AG04450 (cell line): ENCODE measurements at regions of chr3 and their contacts with region 1.

Region 1: DNA sequence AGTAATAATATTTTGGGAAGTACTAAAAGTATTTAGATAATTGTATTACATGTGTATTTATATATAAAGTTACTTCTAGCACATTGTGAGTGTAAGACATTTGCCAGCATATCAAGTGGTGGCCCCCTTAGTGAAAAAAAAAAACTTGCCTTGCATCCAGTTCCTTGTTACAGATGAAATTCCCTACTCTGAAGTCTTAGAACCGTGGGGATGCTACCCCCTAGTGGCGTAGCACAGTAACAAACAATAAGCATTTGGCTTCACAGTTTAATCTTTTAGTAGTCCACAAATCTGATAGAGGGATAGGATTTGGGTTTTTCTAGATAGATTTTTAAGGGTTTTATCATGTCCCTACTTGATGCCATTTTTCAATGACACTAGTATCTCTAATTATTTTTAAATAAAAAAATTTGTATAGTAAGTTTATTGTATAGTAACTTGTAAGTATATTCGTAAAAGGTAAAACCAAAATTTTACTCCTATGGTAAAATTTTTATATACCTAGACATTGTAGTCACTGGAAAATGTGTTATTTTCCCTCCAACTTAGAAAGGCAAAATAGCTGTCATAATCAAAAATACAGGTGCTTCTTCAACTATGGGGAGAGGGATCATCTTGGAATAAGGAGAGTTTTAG is 14.3 kb downstream of the SMC4 start:
- DNase-seq: peak; percentile 74
- H3K4me3 ChIP-seq: no peak overlapping the region
- H3K27ac ChIP-seq: no peak overlapping the region
- H3K27me3 ChIP-seq: no peaks in the 10 kb centered on the region
- CTCF ChIP-seq: peak; percentile 93

Region 2: GRCh38 chr3:160401291-160402095 is 12.2 kb before region 1 on chr3:
- CTCF ChIA-PET with region 1: interaction called, 20 read pairs
- POLR2A ChIA-PET with region 1: no interaction called
- DNase-seq: peak; percentile 55
- H3K4me3 ChIP-seq: peak overlapping the region; percentile 98
- H3K27ac ChIP-seq: peak overlapping the region; percentile 73
- H3K27me3 ChIP-seq: no peaks in the 10 kb centered on the region
- CTCF ChIP-seq: no peak

Region 3: DNA sequence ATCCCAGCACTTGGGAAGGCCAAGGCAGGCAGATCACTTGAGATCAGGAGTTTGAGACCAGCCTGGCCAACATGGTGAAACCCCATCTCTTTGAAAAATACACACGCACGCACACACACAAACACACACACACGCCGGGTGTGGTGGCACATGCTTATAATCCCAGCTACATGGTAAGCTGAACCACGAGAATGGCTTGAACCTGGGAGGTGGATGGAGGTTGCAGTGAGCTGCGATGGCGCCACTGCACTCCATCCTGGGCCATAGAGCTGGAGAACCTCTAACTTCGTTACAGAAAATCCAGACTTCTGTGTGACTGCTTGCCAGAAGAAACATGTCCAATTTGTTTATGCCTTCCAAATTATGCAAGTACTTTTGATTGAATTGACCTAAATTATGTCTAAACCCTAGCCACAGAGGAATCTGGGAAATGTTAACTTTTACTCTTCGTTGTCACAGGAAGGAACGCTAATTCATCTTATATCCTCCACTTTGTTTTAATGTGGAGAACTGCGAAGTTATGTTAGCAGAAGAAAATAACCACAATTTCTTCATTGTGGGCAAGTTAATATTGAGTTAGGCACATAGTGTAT is 14.2 kb after region 1 on chr3:
- CTCF ChIA-PET with region 1: interaction called, 12 read pairs
- POLR2A ChIA-PET with region 1: no interaction called
- DNase-seq: no peak
- H3K4me3 ChIP-seq: no peak overlapping the region
- H3K27ac ChIP-seq: no peak overlapping the region
- H3K27me3 ChIP-seq: no peaks in the 10 kb centered on the region
- CTCF ChIP-seq: no peak

Region 4: GRCh38 chr3:160830792-160831191 is 417.1 kb after region 1 on chr3:
- CTCF ChIA-PET with region 1: no interaction called
- POLR2A ChIA-PET with region 1: no interaction called
- DNase-seq: no peak
- H3K4me3 ChIP-seq: no peak overlapping the region
- H3K27ac ChIP-seq: no peak overlapping the region
- H3K27me3 ChIP-seq: no peaks in the 10 kb centered on the region
- CTCF ChIP-seq: no peak